Naive thymus-derived CD4-positive, alpha-beta T cell (primary cell): ENCODE measurements at regions of chr7 and their contacts with region 1.

Region 1: DNA sequence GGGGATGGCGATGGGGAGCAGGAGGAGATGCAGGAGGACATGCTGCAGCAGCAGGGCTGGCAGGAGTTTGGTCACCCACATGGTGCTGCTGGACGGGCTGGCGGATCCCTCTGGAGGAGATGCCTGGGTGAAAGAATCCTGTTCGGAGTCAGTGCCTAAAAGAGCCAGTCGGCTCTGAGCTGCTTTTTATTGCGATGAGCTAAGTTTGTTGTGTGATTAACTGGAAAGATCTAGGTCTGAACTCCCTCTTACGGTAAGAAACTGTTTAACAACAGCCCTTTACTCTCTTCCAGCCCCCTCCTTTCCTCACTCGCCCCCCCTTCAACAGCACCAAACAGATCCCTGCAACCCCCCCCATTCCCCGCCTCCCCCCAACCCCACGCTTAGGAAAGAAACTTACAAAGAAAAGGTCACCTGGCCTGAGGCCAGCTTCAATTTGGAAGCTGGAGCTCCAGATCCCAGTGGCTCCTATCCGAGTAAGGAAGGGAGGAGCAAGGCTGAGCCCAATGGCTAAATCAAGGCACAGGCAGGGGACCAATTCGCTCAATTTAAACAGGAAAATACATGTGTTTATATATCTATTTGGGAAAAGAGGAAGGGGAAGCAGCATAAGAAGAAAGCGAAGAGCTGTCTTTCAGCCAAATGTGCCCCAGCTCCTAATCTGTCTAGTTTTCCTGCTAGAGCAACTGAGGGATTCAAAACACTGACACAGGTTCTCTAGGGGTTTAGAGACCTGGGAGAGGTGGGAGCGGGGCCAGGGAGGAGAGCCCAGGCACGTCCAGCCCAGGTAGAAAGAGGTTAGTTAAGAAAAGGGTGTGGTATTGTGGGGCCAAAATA is at the start of gene HGF:
- DNase-seq: no peak
- ATAC-seq: peak; percentile 42
- H3K4me3 ChIP-seq: no peak within 1 kb of the TSS
- H3K4me3 Mint-ChIP-seq: peak within 1 kb of the TSS in 2 of 10 donors; percentile 37 to 58
- H3K27ac ChIP-seq: no peak within 1 kb of the TSS
- H3K27ac Mint-ChIP-seq: no peak within 1 kb of the TSS
- H3K4me1 ChIP-seq: no peaks in the 10 kb centered on the region
- H3K4me1 Mint-ChIP-seq: peaks cover 0 to 6% (median 3%) of the 10 kb centered on the region in 7 donors
- H3K27me3 ChIP-seq: no peaks in the 10 kb centered on the region
- H3K27me3 Mint-ChIP-seq: peaks cover 0 to 4% (median 0%) of the 10 kb centered on the region in 5 donors
- total RNA-seq, gene HGF: 1.4 to 4.3 TPM in 2 of 5 experiments, not detected in the others

Region 2: GRCh38 chr7:81791568-81792518 is 21.7 kb after region 1 on chr7:
- CTCF ChIA-PET with region 1: no interaction called
- POLR2A ChIA-PET with region 1: no interaction called
- intact Hi-C with region 1: loop called in 1 of 2 experiments (anchors 2 kb)
- DNase-seq: no peak
- ATAC-seq: no peak
- H3K4me3 ChIP-seq: no peak overlapping the region
- H3K4me3 Mint-ChIP-seq: no peak overlapping the region
- H3K27ac ChIP-seq: no peak overlapping the region
- H3K27ac Mint-ChIP-seq: no peak overlapping the region
- H3K4me1 ChIP-seq: no peaks in the 10 kb centered on the region
- H3K4me1 Mint-ChIP-seq: peaks cover 0 to 2% (median 0%) of the 10 kb centered on the region in 7 donors
- H3K27me3 ChIP-seq: no peaks in the 10 kb centered on the region
- H3K27me3 Mint-ChIP-seq: no peaks in the 10 kb centered on the region

Region 3: GRCh38 chr7:82284936-82285519 is 514.9 kb after region 1 on chr7:
- CTCF ChIA-PET with region 1: no interaction called
- POLR2A ChIA-PET with region 1: no interaction called
- intact Hi-C with region 1: no loop called
- DNase-seq: no peak
- ATAC-seq: no peak
- H3K4me3 ChIP-seq: no peak overlapping the region
- H3K4me3 Mint-ChIP-seq: no peak overlapping the region
- H3K27ac ChIP-seq: no peak overlapping the region
- H3K27ac Mint-ChIP-seq: no peak overlapping the region
- H3K4me1 ChIP-seq: no peaks in the 10 kb centered on the region
- H3K4me1 Mint-ChIP-seq: no peaks in the 10 kb centered on the region
- H3K27me3 ChIP-seq: no peaks in the 10 kb centered on the region
- H3K27me3 Mint-ChIP-seq: no peaks in the 10 kb centered on the region